Left colon (tissue), 2 donors: ENCODE measurements at regions of chr6 and their contacts with region 1.

Region 1: GRCh38 chr6:155528982-155529453 is 73.4 kb upstream of the NOX3 start:
- DNase-seq: no peak
- ATAC-seq: no peak

Region 2: GRCh38 chr6:155327326-155328073 is 201.5 kb before region 1 on chr6:
- intact Hi-C with region 1: loop called in 1 of 2 experiments (anchors 5 kb)
- DNase-seq: peak in 1 of 2 donors; percentile 66
- ATAC-seq: peak; percentile 72